ENCODE measurements at regions of chr16 and their contacts with region 1.

Region 1: GRCh38 chr16:77190478-77191258 is at the start of gene MON1B:
- DNase-seq: peak; percentile 99
- H3K4me3 Mint-ChIP-seq: peak within 1 kb of the TSS; percentile 93
- H3K27ac Mint-ChIP-seq: peak within 1 kb of the TSS; percentile 98
- H3K4me1 Mint-ChIP-seq: peaks cover 26% of the 10 kb centered on the region
- H3K27me3 Mint-ChIP-seq: no peaks in the 10 kb centered on the region
- CTCF ChIP-seq: no peak
- total RNA-seq, gene MON1B: 70.5 and 71.1 TPM in 2 replicates

Region 2: DNA sequence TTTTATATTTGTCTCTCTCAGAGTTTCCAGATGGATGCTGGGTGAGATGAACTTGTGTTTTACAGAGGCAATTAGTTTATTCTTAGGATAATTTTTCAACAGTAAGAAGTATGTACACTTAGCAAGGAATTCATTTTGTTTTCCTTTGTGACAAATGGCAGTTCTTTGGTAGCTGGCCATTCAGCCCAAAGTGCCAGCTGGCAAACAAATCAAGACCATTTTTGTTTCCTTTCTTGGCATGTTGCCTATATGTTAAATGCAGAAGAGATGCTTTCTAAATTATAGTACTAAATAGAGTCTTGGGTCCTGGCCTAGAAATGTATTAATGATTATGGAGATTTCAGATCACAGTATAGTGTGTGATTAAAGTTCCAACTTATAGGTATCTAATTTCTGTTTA is 576.4 kb before region 1 on chr16:
- CTCF ChIA-PET with region 1: no interaction called
- POLR2A ChIA-PET with region 1: no interaction called
- intact Hi-C with region 1: no loop called
- DNase-seq: no peak
- H3K4me3 Mint-ChIP-seq: no peak overlapping the region
- H3K27ac Mint-ChIP-seq: no peak overlapping the region
- H3K4me1 Mint-ChIP-seq: no peaks in the 10 kb centered on the region
- H3K27me3 Mint-ChIP-seq: no peaks in the 10 kb centered on the region
- CTCF ChIP-seq: no peak

Region 3: GRCh38 chr16:77157346-77158058 is 33.2 kb before region 1 on chr16:
- CTCF ChIA-PET with region 1: no interaction called
- POLR2A ChIA-PET with region 1: no interaction called
- intact Hi-C with region 1: no loop called
- DNase-seq: no peak
- H3K4me3 Mint-ChIP-seq: no peak overlapping the region
- H3K27ac Mint-ChIP-seq: no peak overlapping the region
- H3K4me1 Mint-ChIP-seq: peaks cover 5% of the 10 kb centered on the region
- H3K27me3 Mint-ChIP-seq: no peaks in the 10 kb centered on the region
- CTCF ChIP-seq: no peak

Region 4: GRCh38 chr16:77211880-77212740 is 21.4 kb after region 1 on chr16:
- CTCF ChIA-PET with region 1: interaction called, 3 read pairs
- POLR2A ChIA-PET with region 1: interaction called, 23 read pairs
- intact Hi-C with region 1: no loop called
- DNase-seq: peak; percentile 70
- H3K4me3 Mint-ChIP-seq: peak overlapping the region; percentile 66
- H3K27ac Mint-ChIP-seq: peak overlapping the region; percentile 15
- H3K4me1 Mint-ChIP-seq: peaks cover 14% of the 10 kb centered on the region
- H3K27me3 Mint-ChIP-seq: no peaks in the 10 kb centered on the region
- CTCF ChIP-seq: no peak

Region 5: DNA sequence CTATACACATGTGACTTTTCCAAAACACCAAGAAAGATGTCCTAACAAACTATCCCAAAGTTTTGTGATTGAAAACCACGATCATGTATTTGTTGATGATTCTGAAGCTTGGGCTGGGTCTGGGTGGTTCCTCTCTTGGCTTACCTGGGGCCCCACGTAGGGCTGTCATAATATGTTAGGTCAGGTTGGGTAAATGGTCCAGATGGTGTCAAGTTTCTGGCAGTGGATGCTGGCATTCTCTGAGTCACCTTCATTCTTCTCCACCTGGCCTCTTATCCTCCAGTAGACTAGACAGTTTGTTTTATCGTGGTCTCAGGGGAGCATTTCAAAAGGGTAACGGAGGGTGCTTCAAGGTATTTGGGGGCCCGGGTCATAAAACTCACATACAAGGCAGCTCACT is 47.9 kb after region 1 on chr16:
- CTCF ChIA-PET with region 1: no interaction called
- POLR2A ChIA-PET with region 1: no interaction called
- intact Hi-C with region 1: no loop called
- DNase-seq: peak; percentile 34
- H3K4me3 Mint-ChIP-seq: no peak overlapping the region
- H3K27ac Mint-ChIP-seq: no peak overlapping the region
- H3K4me1 Mint-ChIP-seq: peaks cover 8% of the 10 kb centered on the region
- H3K27me3 Mint-ChIP-seq: peaks cover 10% of the 10 kb centered on the region
- CTCF ChIP-seq: no peak